ENCODE measurements at regions of chr15 and their contacts with region 1.

Region 1: GRCh38 chr15:34038023-34038870 is 757 bp downstream of the AVEN start:
- DNase-seq: peak; percentile 59 to 80
- ATAC-seq: peak; percentile 93 to 95
- H3K4me3 ChIP-seq: peak overlapping the region; percentile 78 to 88 (median 82)
- H3K27ac ChIP-seq: peak overlapping the region; percentile 87 to 93 (median 89)
- H3K4me1 ChIP-seq: peaks cover 10 to 14% of the 10 kb centered on the region in 2 donors
- H3K27me3 ChIP-seq: no peaks in the 10 kb centered on the region
- CTCF ChIP-seq: no peak
- POLR2A ChIP-seq: peak; percentile 70 to 72

Region 2: GRCh38 chr15:34056936-34057335 is 18.7 kb after region 1 on chr15:
- in situ Hi-C with region 1: no loop called
- intact Hi-C with region 1: no loop called
- DNase-seq: no peak
- ATAC-seq: no peak
- H3K4me3 ChIP-seq: no peak overlapping the region
- H3K27ac ChIP-seq: no peak overlapping the region
- H3K4me1 ChIP-seq: peaks cover 0 to 4% of the 10 kb centered on the region in 2 donors
- H3K27me3 ChIP-seq: no peaks in the 10 kb centered on the region
- CTCF ChIP-seq: no peak
- POLR2A ChIP-seq: no peak

Region 3: DNA sequence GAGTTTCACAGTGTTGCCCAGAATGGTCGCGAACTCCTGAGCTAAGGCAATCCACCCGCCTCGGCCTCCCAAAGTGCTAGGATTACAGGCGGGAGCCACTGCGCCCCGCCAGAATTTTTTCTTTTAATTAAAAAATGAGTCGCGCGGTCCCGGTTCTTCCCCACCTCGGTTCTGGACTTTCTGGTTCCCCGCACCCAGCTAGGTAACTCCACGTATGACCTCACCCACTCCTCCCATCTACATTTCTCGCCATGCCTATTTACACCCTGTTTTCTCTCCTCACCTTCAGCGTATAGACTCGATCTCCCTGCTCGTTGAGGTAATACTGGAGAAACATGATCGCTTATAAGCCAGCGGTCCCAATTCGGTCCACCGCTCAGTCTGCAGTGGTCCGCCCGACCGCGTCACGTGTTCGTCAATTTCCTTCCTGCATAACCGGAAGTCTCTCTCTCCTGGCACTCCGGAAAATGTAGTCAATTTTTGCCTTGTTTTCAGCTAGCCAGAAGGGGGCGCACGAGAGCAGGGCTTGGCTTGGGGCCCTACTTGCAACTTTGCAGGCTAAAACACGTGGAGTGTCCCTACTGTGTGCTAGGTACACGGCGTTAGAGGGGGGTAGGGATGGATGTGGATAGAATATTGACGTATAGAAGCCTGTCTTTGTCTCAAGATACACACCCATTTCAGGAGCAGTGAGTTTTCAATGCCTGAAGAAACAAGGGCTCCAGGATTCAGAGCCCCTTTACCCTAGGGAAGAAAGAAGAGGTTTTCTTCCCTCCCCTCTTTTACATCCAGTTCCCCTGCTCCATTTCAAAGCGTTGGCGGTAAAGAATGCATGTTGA is 304.7 kb after region 1 on chr15 and contains the starts of genes NOP10 and NUTM1:
- in situ Hi-C with region 1: no loop called
- intact Hi-C with region 1: loop called (anchors 10 kb)
- DNase-seq: peak; percentile 83 to 89
- ATAC-seq: peak; percentile 98 to 99
- H3K4me3 ChIP-seq: peak within 1 kb of the TSS; percentile 80 to 99 (median 84)
- H3K27ac ChIP-seq: peak within 1 kb of the TSS; percentile 88 to 96 (median 90)
- H3K4me1 ChIP-seq: peaks cover 14 to 21% of the 10 kb centered on the region in 2 donors
- H3K27me3 ChIP-seq: no peaks in the 10 kb centered on the region
- CTCF ChIP-seq: peak; percentile 93 to 97 (median 94)
- POLR2A ChIP-seq: peak; percentile 67 to 72
- total RNA-seq, gene NOP10: 142 to 194 (median 170) TPM
- total RNA-seq, gene NUTM1: not detected